HepG2 (cell line): ENCODE measurements at regions of chr19 and their contacts with region 1.

Region 1: GRCh38 chr19:18785179-18786128 is 5.7 kb downstream of the COMP start:
- DNase-seq: peak; percentile 65
- ATAC-seq: peak; percentile 70
- H3K4me3 ChIP-seq: peak overlapping the region; percentile 32 to 81 (median 52); a peak in 5 of 6 replicates
- H3K27ac ChIP-seq: no peak overlapping the region
- H3K4me1 ChIP-seq: peaks cover 41% of the 10 kb centered on the region
- H3K27me3 ChIP-seq: peaks cover 11 to 36% of the 10 kb centered on the region in 2 experiments
- CTCF ChIP-seq: 0 out of 2 replicates have a peak, but pooled peaks have one; percentile 7
- EP300 ChIP-seq: no peak
- POLR2A ChIP-seq: no peak
- RAD21 ChIP-seq: no peak

Region 2: GRCh38 chr19:18733196-18733647 is 52.2 kb before region 1 on chr19:
- CTCF ChIA-PET with region 1: no interaction called
- POLR2A ChIA-PET with region 1: no interaction called
- in situ Hi-C with region 1: no loop called
- intact Hi-C with region 1: no loop called
- DNase-seq: peak; percentile 18
- ATAC-seq: no peak
- H3K4me3 ChIP-seq: no peak overlapping the region
- H3K27ac ChIP-seq: peak overlapping the region; percentile 13
- H3K4me1 ChIP-seq: peaks cover 67% of the 10 kb centered on the region
- H3K27me3 ChIP-seq: no peaks in the 10 kb centered on the region
- CTCF ChIP-seq: no peak
- EP300 ChIP-seq: no peak
- POLR2A ChIP-seq: no peak
- RAD21 ChIP-seq: no peak

Region 3: GRCh38 chr19:18839465-18840287 is 54.2 kb after region 1 on chr19:
- CTCF ChIA-PET with region 1: no interaction called
- POLR2A ChIA-PET with region 1: interaction called, 3 read pairs
- in situ Hi-C with region 1: loop called (anchors 5 kb)
- intact Hi-C with region 1: no loop called
- DNase-seq: peak; percentile 87
- ATAC-seq: peak; percentile 91
- H3K4me3 ChIP-seq: peak overlapping the region; percentile 24 to 72 (median 40); a peak in 5 of 6 replicates
- H3K27ac ChIP-seq: peak overlapping the region; percentile 89
- H3K4me1 ChIP-seq: peaks cover 95% of the 10 kb centered on the region
- H3K27me3 ChIP-seq: no peaks in the 10 kb centered on the region
- CTCF ChIP-seq: peak; percentile 75
- EP300 ChIP-seq: peak in 1 of 2 experiments; percentile 67; a peak in 2 of 4 replicates
- POLR2A ChIP-seq: 0 out of 4 replicates have a peak, but pooled peaks of 1 of the 2 experiments have one; percentile 12
- RAD21 ChIP-seq: peak; percentile 37